ENCODE measurements at regions of chr17 and their contacts with region 1.

Region 1: GRCh38 chr17:48131216-48131824 is 23.8 kb downstream of the SNX11 start:
- DNase-seq: no peak
- H3K4me3 Mint-ChIP-seq: no peak overlapping the region
- H3K27ac Mint-ChIP-seq: no peak overlapping the region
- H3K4me1 Mint-ChIP-seq: peaks cover 2% of the 10 kb centered on the region
- H3K27me3 Mint-ChIP-seq: no peaks in the 10 kb centered on the region

Region 2: GRCh38 chr17:48081858-48082257 is 49.5 kb before region 1 on chr17:
- intact Hi-C with region 1: loop called (anchors 2 kb)
- DNase-seq: no peak
- H3K4me3 Mint-ChIP-seq: no peak overlapping the region
- H3K27ac Mint-ChIP-seq: no peak overlapping the region
- H3K4me1 Mint-ChIP-seq: peaks cover 5% of the 10 kb centered on the region
- H3K27me3 Mint-ChIP-seq: no peaks in the 10 kb centered on the region